Caco-2 (cell line): ENCODE measurements at regions of chr9 and their contacts with region 1.

Region 1: DNA sequence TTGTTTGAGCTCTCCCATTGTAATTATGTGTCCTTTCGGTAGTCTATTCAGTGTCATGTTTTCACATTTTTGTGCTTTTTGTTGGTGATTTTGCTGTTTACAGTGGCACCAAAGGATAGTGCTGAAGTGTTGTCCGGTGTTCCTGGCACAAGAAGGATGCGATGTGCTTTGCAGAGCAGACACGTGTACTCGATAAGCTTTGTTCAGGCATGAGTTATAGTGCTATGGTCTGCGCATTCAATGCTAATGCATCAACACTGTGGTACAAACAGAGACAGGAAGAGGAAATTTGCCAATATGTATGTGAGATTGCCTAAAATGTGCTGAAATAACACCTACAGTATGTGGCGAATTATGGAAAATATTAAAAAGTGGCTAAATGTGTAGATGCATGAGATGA is 913.4 kb upstream of the ACO1 start:
- DNase-seq: no peak
- H3K4me3 ChIP-seq: no peak overlapping the region
- H3K4me3 Mint-ChIP-seq: no peak overlapping the region
- H3K27ac Mint-ChIP-seq: no peak overlapping the region
- H3K4me1 ChIP-seq: no peaks in the 10 kb centered on the region
- H3K4me1 Mint-ChIP-seq: no peaks in the 10 kb centered on the region
- H3K27me3 ChIP-seq: no peaks in the 10 kb centered on the region
- H3K27me3 Mint-ChIP-seq: peaks cover 14% of the 10 kb centered on the region
- CTCF ChIP-seq: no peak

Region 2: GRCh38 chr9:31119882-31120454 is 351.0 kb before region 1 on chr9:
- CTCF ChIA-PET with region 1: no interaction called
- POLR2A ChIA-PET with region 1: no interaction called
- intact Hi-C with region 1: loop called (anchors 10 kb)
- DNase-seq: peak in 1 of 2 experiments; percentile 40
- H3K4me3 ChIP-seq: no peak overlapping the region
- H3K4me3 Mint-ChIP-seq: no peak overlapping the region
- H3K27ac Mint-ChIP-seq: no peak overlapping the region
- H3K4me1 ChIP-seq: no peaks in the 10 kb centered on the region
- H3K4me1 Mint-ChIP-seq: no peaks in the 10 kb centered on the region
- H3K27me3 ChIP-seq: no peaks in the 10 kb centered on the region
- H3K27me3 Mint-ChIP-seq: no peaks in the 10 kb centered on the region
- CTCF ChIP-seq: peak; percentile 38 to 46